Aorta (tissue), 5 donors: ENCODE measurements at regions of chr15 and their contacts with region 1.

Region 1: DNA sequence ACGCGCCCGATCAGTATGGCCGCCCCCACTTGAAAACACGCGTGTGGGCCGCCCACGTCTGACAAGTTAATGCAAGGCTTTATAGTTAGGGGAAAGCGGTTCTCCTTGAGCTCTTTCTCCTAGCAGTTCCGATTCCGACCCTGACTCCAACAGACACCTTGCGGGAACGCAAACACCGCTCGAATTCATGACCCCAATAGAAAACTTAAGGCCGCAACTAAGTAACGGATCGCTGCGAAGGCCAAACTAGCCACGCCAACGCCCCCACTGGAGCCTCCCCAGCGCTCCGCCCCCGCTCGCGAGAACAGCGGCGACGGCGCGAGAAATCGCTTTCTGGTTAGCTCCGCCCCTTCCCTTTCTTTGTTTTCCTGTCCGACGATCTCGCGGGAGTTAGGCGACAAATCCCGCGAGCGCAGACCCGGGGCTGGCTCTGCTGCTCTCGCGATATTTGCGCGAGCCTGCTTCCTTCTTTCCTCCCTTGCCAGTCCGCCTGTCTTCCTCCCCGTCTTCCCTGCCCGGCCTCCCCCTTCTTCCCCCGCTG is at the start of gene IREB2:
- DNase-seq: peak; percentile 98
- ATAC-seq: peak; percentile 99
- H3K4me3 ChIP-seq: peak within 1 kb of the TSS; percentile 71 to 93
- H3K27ac ChIP-seq: peak within 1 kb of the TSS; percentile 78
- H3K4me1 ChIP-seq: no peaks in the 10 kb centered on the region
- H3K27me3 ChIP-seq: no peaks in the 10 kb centered on the region
- total RNA-seq, gene IREB2: 33.9 to 49.4 TPM

Region 2: DNA sequence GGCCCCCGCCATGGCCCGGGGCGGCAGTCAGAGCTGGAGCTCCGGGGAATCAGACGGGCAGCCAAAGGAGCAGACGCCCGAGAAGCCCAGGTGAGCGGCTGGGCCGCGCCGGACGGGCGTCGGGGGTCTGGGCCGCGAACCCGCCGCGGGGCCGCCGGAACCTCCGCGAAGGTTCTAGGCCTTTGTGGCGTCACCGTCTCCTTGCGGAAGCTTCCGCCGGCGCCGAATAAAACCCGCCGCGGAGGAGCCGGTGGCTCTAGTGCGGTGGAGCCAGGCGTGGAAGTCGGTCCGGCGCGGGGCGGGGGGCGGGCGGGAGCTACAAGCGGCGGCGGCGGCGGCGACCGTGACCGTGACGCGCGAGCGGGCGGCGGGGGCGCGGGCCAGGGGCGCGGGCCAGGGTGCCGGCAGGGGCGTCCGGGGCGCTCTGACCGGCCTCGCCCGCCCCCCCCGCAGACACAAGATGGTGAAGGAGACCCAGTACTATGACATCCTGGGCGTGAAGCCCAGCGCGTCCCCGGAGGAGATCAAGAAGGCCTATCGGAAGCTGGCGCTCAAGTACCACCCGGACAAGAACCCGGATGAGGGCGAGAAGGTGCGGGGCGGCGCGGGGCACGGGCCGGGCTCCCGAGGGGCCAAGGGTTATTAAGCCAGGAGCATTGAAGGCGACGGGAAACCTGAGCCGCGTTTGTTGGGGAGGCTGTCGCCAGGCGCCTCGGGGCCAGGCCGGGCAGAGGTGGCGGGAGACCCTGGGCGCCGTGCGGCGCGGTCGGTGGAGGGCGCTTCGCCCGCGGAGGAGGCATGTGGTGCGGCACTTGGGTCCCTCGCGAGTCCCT is 173.3 kb before region 1 on chr15 and contains the start of gene DNAJA4:
- intact Hi-C with region 1: loop called in 1 of 2 experiments (anchors 10 kb)
- DNase-seq: peak; percentile 71 to 88
- ATAC-seq: peak; percentile 59
- H3K4me3 ChIP-seq: peak within 1 kb of the TSS; percentile 39 to 45
- H3K27ac ChIP-seq: peak within 1 kb of the TSS; percentile 64 to 69
- H3K4me1 ChIP-seq: no peaks in the 10 kb centered on the region
- H3K27me3 ChIP-seq: no peaks in the 10 kb centered on the region
- total RNA-seq, gene DNAJA4: 20.2 to 53.0 TPM

Region 3: DNA sequence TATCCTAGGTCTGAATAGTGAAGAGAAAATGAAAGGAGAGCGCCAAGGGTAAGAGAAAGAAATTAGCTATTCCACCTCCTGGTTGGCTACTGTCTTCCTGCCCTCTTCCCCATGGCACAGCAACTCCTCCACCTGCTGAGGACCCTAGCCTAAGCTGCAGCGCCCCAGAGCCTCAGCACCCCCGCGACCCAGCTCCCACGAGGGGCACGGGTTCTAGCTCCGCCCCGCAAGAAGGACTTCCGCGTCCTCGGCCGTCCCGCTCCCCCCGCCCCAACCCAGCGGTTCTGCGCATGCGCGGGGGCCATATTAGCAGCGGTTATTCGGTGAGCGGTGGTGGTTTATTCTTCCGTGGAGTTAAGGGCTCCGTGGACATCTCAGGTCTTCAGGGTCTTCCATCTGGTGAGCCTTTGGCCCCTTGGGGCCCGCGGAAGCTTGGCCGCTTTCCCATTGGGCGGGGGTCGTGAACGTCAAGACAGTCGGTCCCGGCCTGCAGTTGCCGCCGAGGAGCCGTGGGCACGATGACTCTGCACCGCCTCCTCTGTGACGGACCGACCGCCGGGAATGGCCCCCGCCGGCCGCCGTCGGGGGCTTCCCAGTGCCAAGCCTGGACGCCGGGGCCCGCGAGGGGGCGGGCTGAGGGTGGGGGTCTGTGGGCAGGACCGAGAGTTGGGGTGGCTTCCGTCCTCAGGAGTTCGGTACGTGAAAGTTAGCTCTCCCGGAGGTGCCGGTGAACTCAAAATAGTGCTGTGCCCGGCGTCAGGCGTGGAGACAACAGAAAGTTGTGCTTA is 102.5 kb after region 1 on chr15 and contains the start of gene PSMA4:
- intact Hi-C with region 1: loop called in 1 of 2 experiments (anchors 5 kb)
- DNase-seq: peak; percentile 95 to 98
- ATAC-seq: peak; percentile 97
- H3K4me3 ChIP-seq: peak within 1 kb of the TSS; percentile 36 to 61
- H3K27ac ChIP-seq: peak within 1 kb of the TSS; percentile 38 to 44
- H3K4me1 ChIP-seq: peaks cover 0 to 9% of the 10 kb centered on the region in 2 donors
- H3K27me3 ChIP-seq: no peaks in the 10 kb centered on the region
- total RNA-seq, gene PSMA4: 88.5 to 97.1 TPM

Region 4: DNA sequence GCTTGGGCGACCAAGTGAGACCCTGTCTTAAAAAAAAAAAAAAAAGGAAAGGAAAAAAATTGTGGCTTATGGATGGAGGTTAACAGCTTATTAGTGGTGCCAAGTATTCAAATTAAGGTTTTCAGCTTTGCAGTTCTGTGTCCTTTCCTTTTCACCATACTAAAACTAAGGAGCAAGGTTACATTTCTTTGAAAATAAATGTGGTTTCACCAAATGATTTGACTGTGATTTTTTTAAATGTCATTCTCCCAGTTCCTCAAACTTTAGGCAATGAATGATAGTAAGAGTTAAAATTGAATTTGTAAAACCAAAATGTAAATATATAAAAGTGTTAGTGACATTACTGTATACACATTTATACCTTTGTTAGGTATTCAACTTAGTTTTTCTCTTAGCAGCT is 137.1 kb after region 1 on chr15:
- intact Hi-C with region 1: no loop called
- DNase-seq: no peak
- ATAC-seq: no peak
- H3K4me3 ChIP-seq: no peak overlapping the region
- H3K27ac ChIP-seq: no peak overlapping the region
- H3K4me1 ChIP-seq: no peaks in the 10 kb centered on the region
- H3K27me3 ChIP-seq: no peaks in the 10 kb centered on the region